Left cardiac atrium (tissue), 4 donors: ENCODE measurements at regions of chr13 and their contacts with region 1.

Region 1: DNA sequence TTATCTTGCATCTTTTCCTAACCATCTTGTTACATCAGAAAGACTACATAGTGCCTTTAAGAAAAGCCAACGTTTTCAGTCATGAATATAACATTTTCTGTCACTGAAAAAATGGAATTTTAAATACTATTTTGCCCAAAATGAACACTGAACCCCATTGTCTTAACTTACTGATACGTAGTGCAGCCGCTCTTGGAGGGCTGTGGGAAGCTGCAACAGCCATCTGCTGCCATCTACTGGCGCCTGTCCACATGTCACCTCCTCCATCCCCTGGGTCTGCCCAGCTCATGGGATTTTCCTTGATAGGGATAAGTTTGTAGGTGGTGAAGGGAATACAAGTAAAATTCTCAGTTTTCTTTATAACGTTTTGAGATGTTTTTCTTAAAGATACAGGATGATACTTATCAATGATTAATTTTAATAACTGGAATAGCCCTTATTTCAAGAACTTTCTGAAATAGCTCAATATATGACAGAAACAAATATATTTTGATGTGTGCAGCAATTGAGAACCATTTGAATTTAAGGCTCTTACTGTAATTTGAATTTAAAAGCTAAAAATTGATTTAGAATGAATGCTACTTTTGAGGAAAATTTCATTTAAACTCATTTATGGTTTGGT is 73.7 kb downstream of the GGACT start:
- DNase-seq: peak; percentile 85
- ATAC-seq: peak; percentile 85 to 94

Region 2: DNA sequence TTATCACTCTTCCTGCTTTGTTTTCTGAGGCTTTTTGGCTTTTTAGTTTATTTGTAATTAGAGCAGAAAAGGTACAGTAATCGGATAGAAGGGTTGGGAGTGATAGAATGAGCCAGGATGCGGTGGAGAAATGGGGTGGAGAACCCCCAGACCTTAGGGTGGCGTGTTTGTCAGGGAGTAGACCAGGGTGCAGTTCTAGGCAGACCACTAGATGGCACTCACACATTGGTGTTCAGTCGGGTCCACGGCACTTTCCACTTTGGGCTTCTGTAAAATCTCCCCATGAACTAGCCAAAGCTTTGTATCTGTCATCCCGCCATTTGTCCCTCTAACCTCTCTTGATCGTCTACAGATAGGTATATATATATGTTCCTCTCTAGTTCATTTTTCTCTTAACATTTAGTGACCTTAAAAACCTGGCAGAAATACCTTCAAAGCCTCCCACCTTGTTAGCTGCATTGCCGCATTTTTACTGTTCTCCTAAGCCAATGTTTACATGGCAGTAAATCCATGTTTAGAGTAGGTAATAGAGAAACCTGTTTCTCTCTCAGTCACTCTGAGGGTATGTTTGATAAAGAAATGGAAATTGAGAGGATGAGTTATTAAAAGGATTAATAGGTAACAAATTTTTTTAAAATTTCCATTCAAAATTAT is 858.7 kb before region 1 on chr13:
- intact Hi-C with region 1: loop called (anchors 5 to 10 kb)
- DNase-seq: peak; percentile 73
- ATAC-seq: peak; percentile 63 to 64

Region 3: DNA sequence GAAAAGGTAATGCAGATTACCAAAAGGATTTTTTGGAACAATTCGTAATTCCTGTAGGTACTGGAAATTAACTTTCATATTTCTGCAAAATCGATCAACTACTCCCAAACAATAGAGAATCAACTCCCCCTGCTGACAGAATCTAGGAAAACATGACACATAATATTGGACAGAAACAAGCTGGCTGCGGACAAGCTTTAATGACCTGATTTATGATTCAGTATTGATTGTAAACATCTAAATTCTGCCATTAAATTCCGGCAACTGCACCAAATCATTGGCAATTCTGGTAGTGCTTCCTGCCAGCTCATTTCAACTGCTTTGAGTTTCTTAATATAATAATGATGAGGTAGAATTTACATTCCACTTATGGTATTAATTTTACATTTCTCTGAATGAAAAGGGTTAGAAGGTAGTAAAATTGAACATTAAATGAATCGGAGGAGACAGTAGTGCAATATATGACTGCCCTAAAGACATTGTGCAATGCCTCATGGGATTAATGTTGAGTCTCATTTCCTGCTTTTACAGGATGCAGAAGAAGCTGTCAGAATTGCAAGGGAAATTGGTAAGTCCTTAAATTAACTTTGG is 279.5 kb before region 1 on chr13:
- intact Hi-C with region 1: loop called in 1 of 2 experiments (anchors 10 kb)
- DNase-seq: no peak
- ATAC-seq: no peak